ENCODE measurements at regions of chr18 and their contacts with region 1.

Region 1: DNA sequence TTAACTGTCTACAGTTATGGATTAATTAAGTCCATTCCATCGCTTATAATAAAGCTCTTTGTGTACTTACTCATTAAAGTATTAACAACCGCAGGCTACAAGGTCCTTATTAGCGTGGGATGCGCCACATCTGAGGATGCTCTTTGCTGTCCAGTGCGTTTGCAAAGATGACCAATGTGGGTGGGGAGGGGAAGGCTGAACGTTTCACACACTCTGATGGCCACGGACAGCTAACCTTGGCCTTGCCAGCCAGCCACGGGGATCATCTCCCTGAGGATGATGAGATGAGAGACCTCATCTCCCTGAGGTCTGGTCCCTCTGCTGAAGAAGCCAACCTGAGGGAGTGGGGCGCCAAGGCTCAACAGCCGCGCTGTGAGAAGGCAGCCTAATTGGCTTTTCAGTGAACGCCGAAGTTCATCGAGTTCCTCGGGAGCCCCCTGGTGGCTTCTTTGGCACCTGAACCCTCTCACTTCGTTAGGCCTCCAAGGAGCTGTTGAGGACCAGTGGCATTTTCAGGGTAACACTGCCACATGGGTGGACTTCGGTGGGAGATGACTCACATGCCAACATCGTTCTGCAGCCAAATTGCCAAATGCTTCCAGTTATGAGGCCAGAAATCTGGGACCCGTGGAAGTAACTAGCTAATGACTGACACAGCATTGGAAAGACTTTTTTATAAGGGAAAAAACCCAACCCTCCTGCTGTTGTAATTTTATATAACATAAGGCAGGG is 69.3 kb upstream of the SEC11C start:
- DNase-seq: peak; percentile 64
- H3K4me3 ChIP-seq: no peak overlapping the region
- H3K27ac ChIP-seq: no peak overlapping the region
- H3K4me1 ChIP-seq: no peaks in the 10 kb centered on the region
- CTCF ChIP-seq: peak; percentile 79

Region 2: DNA sequence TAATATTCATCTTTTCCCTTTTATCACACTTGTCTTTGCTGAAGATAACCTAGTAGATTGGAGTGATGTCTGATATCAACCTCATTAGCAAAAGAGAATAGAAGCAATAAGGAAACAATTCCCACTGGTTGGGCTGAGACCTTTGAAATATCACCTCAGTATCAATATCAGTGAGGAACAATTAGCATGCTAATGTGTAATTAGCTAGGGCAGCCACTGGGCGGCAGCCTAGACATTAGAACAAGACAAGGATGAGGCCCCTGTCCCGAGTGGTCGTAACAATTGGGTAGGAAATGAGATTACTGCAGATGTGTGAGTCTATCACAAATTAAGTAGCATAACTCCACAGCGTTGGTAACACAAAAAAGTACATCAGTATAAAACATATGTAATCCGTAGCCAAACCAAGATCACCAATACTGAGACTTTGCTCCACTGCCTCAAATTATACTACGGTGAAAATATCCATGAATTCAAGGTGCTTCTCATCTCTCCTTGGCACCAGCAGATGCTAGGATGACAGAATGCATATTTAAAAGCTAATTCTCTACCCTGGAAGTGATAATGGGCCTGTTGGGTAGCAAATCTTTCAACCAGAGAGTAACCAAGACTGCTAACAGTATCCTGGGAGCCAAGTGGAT is 540.5 kb before region 1 on chr18:
- CTCF ChIA-PET with region 1: no interaction called
- POLR2A ChIA-PET with region 1: no interaction called
- intact Hi-C with region 1: loop called (anchors 5 kb)
- DNase-seq: peak; percentile 61
- H3K4me3 ChIP-seq: no peak overlapping the region
- H3K27ac ChIP-seq: no peak overlapping the region
- H3K4me1 ChIP-seq: peaks cover 27% of the 10 kb centered on the region
- CTCF ChIP-seq: peak; percentile 82

Measured in OCI-LY7 (cell line).